Calu3 (cell line): ENCODE measurements at regions of chr6 and their contacts with region 1.

Region 1: DNA sequence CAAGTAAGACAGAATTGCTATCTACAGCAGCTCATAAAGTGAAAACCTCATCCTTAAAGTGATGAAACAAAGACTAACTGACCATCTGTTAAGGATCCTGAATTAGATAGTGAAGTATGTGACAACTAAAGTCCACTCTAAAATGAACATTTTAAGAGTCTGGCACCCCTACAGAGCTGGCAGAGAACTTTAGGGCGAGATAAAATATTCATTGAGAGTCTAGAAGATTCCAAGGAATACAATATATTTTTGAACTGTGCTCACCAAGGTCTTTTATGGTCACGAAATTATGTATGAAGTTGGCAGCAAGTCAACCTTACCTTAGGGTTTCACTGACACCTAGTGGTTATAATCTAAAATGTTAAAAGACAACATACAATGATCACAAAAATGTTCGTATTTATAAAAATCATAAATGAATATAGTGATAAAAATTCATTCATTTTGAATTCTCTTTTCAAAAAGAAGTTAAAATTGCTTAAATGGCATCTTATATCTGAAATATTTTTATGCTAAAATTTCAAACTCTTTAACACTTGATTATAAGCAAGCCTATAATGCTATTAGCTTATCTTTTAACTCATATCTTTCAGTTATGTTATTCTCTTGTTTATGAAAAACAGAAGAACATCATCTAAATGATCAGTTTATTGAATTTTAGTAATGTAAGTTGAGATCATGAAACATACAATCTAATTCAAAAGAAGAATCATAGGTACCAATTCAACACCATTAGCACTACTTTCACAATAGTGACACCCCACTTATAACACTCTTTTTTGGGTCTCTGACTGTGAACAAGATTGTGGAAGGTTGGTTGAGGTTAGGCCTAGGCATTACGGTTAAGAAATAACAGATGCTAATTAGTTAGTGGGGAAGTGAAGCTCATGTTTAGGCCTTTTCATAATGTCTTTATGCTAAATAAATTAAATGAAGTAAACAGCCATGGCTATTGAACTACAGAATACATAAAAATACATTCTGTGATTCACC is 27.5 kb downstream of the RSPH3 start:
- DNase-seq: no peak
- H3K4me3 Mint-ChIP-seq: no peak overlapping the region
- H3K27ac Mint-ChIP-seq: peak overlapping the region; percentile 53
- H3K4me1 Mint-ChIP-seq: peaks cover 18% of the 10 kb centered on the region
- H3K27me3 Mint-ChIP-seq: no peaks in the 10 kb centered on the region
- CTCF ChIP-seq: peak; percentile 37

Region 2: GRCh38 chr6:158213925-158214674 is 758.4 kb before region 1 on chr6:
- CTCF ChIA-PET with region 1: no interaction called
- intact Hi-C with region 1: loop called (anchors 10 kb)
- DNase-seq: peak; percentile 72
- H3K4me3 Mint-ChIP-seq: no peak overlapping the region
- H3K27ac Mint-ChIP-seq: no peak overlapping the region
- H3K4me1 Mint-ChIP-seq: peaks cover 8% of the 10 kb centered on the region
- H3K27me3 Mint-ChIP-seq: no peaks in the 10 kb centered on the region
- CTCF ChIP-seq: peak; percentile 76

Region 3: GRCh38 chr6:158481690-158482473 is 490.7 kb before region 1 on chr6:
- CTCF ChIA-PET with region 1: no interaction called
- intact Hi-C with region 1: no loop called
- DNase-seq: no peak
- H3K4me3 Mint-ChIP-seq: no peak overlapping the region
- H3K27ac Mint-ChIP-seq: no peak overlapping the region
- H3K4me1 Mint-ChIP-seq: no peaks in the 10 kb centered on the region
- H3K27me3 Mint-ChIP-seq: no peaks in the 10 kb centered on the region
- CTCF ChIP-seq: no peak

Region 4: DNA sequence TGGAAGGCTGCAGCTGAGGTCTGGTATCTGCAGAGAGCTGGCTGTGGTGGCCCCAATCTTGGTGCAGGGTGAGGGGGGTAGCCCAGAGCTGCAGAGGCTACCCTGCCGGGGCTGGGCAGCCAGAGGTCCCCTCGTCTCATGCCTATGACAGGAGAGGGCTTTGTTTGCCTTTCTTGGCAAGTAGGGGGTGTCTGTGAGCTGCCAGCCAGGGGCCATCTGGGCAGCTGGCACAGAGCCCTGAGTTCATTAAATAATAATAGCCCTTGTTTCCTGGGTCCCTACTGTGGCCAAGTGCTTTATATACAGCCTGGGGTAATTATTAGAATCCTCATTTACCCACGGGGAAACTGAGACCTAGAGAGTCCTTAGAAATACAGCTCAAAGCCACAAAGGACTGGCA is 219.9 kb before region 1 on chr6:
- CTCF ChIA-PET with region 1: no interaction called
- intact Hi-C with region 1: loop called (anchors 1 kb)
- DNase-seq: peak; percentile 70
- H3K4me3 Mint-ChIP-seq: no peak overlapping the region
- H3K27ac Mint-ChIP-seq: peak overlapping the region; percentile 54
- H3K4me1 Mint-ChIP-seq: peaks cover 33% of the 10 kb centered on the region
- H3K27me3 Mint-ChIP-seq: no peaks in the 10 kb centered on the region
- CTCF ChIP-seq: peak; percentile 23

Region 5: DNA sequence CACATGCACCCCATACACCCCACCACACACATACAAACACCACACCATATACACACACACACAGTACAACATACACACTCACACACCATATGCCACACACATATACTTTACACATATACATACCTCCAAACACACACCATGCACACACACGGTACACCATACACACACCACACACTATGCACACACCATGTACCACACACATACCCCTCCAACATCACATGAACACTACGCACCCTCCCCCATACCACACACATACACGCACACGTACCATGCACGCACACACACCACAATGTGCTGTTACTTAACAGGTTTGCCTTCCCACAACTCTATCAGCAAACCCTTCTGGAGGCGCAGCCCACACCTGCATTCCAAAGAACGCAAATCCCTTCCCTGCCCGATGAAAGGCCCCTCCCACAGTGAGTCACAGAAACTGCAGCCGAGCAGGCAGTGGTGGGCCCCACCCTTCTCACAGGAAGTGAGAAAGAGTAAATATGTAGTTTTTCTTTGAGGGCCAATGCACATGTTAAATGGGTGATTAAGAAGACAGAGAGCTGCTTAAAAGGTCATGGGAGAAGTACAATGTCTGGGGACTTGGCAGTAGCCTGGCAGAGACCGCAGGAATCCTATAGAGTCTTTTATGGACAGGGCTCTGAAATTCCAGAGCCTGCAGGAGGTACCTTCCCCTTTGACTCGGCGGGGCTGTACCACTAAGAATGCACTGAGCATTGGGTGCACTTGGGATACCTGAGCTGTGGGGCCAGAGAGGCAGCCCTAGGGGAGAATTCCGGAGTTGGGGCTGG is 119.3 kb before region 1 on chr6:
- CTCF ChIA-PET with region 1: interaction called, 3 read pairs
- intact Hi-C with region 1: loop called (anchors 1 kb)
- DNase-seq: peak; percentile 97
- H3K4me3 Mint-ChIP-seq: no peak overlapping the region
- H3K27ac Mint-ChIP-seq: no peak overlapping the region
- H3K4me1 Mint-ChIP-seq: peaks cover 40% of the 10 kb centered on the region
- H3K27me3 Mint-ChIP-seq: no peaks in the 10 kb centered on the region
- CTCF ChIP-seq: no peak

Region 6: GRCh38 chr6:158910484-158911348 is 61.8 kb before region 1 on chr6:
- CTCF ChIA-PET with region 1: interaction called, 5 read pairs
- intact Hi-C with region 1: loop called (anchors 2 kb)
- DNase-seq: peak; percentile 76
- H3K4me3 Mint-ChIP-seq: peak overlapping the region; percentile 49
- H3K27ac Mint-ChIP-seq: peak overlapping the region; percentile 95
- H3K4me1 Mint-ChIP-seq: peaks cover 63% of the 10 kb centered on the region
- H3K27me3 Mint-ChIP-seq: no peaks in the 10 kb centered on the region
- CTCF ChIP-seq: no peak

Region 7: GRCh38 chr6:159017757-159018559 is 45.4 kb after region 1 on chr6:
- CTCF ChIA-PET with region 1: no interaction called
- intact Hi-C with region 1: no loop called
- DNase-seq: no peak
- H3K4me3 Mint-ChIP-seq: no peak overlapping the region
- H3K27ac Mint-ChIP-seq: no peak overlapping the region
- H3K4me1 Mint-ChIP-seq: no peaks in the 10 kb centered on the region
- H3K27me3 Mint-ChIP-seq: no peaks in the 10 kb centered on the region
- CTCF ChIP-seq: no peak